T-cell (primary cell): ENCODE measurements at regions of chr6 and their contacts with region 1.

Region 1: DNA sequence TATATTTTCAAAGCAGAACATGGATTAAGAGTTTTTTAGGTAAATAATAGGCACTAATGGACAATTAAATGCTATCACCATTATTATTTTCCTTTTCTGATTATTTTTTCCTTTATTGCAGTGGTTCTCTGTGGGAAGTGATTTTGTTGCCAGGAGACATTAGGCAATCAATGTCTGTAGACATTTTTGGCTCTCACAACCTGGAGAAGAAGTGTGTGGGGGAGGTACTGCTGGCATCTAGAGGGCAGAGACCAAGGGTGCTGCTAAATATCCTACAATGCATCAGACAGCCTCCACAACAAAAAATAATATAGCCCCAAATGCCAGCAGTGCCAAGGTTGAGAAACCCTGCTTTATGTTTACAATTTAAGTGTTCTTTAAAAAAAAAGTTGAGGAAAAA is 8.3 kb downstream of the IFNGR1 start:
- DNase-seq: no peak
- ATAC-seq: no peak
- H3K4me3 ChIP-seq: no peak overlapping the region
- H3K4me3 Mint-ChIP-seq: no peak overlapping the region
- H3K27ac ChIP-seq: no peak overlapping the region
- H3K27ac Mint-ChIP-seq: no peak overlapping the region
- H3K4me1 ChIP-seq: peaks cover 0 to 6% of the 10 kb centered on the region in 2 experiments
- H3K4me1 Mint-ChIP-seq: peaks cover 61 to 66% (median 64%) of the 10 kb centered on the region in 3 donors
- H3K27me3 ChIP-seq: no peaks in the 10 kb centered on the region
- H3K27me3 Mint-ChIP-seq: no peaks in the 10 kb centered on the region

Region 2: GRCh38 chr6:137351890-137352289 is 141.0 kb after region 1 on chr6:
- CTCF ChIA-PET with region 1: no interaction called
- POLR2A ChIA-PET with region 1: no interaction called
- DNase-seq: peak in 5 of 35 experiments; percentile 6 to 38 (median 13)
- ATAC-seq: no peak
- H3K4me3 ChIP-seq: no peak overlapping the region
- H3K4me3 Mint-ChIP-seq: no peak overlapping the region
- H3K27ac ChIP-seq: no peak overlapping the region
- H3K27ac Mint-ChIP-seq: peak overlapping the region in 1 of 2 donors; percentile 4
- H3K4me1 ChIP-seq: peaks cover 3 to 10% of the 10 kb centered on the region in 2 experiments
- H3K4me1 Mint-ChIP-seq: peaks cover 15 to 23% (median 16%) of the 10 kb centered on the region in 3 donors
- H3K27me3 ChIP-seq: no peaks in the 10 kb centered on the region
- H3K27me3 Mint-ChIP-seq: no peaks in the 10 kb centered on the region

Region 3: DNA sequence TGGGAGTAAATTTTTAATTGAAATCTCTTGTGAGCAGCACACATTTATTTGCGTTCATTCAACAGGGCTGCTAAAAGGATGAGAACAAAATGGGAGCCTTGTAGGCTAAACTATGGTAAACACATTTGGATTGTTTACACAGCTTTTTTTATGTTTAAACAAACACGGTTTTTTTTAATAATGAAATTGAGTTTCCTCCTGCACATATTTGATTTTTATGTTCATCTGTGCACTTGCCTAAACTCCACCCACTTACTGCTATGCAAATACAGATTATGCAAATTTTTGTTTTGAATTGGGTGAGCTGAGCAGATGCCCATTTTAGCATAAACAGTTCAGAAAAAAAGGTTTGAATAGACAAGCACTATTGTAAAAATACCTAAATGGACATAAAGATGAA is 191.3 kb after region 1 on chr6:
- CTCF ChIA-PET with region 1: no interaction called
- POLR2A ChIA-PET with region 1: interaction called in 1 of 2 experiments, 16 read pairs
- DNase-seq: no peak
- ATAC-seq: no peak
- H3K4me3 ChIP-seq: no peak overlapping the region
- H3K4me3 Mint-ChIP-seq: no peak overlapping the region
- H3K27ac ChIP-seq: no peak overlapping the region
- H3K27ac Mint-ChIP-seq: no peak overlapping the region
- H3K4me1 ChIP-seq: peaks cover 0 to 4% of the 10 kb centered on the region in 2 experiments
- H3K4me1 Mint-ChIP-seq: peaks cover 0 to 24% (median 5%) of the 10 kb centered on the region in 3 donors
- H3K27me3 ChIP-seq: no peaks in the 10 kb centered on the region
- H3K27me3 Mint-ChIP-seq: no peaks in the 10 kb centered on the region